HepG2 (cell line): ENCODE measurements at regions of chr12 and their contacts with region 1.

Region 1: GRCh38 chr12:52032804-52033502 is 18.3 kb upstream of the NR4A1 start:
- DNase-seq: peak; percentile 90
- ATAC-seq: peak; percentile 96
- H3K4me3 ChIP-seq: peak overlapping the region; percentile 31 to 51 (median 37); a peak in 5 of 6 replicates
- H3K27ac ChIP-seq: no peak overlapping the region
- H3K4me1 ChIP-seq: peaks cover 35% of the 10 kb centered on the region
- H3K27me3 ChIP-seq: peaks cover 3 to 40% of the 10 kb centered on the region in 2 experiments; a peak in 4 of 5 replicates
- CTCF ChIP-seq: 0 out of 2 replicates have a peak, but pooled peaks have one; percentile 4
- EP300 ChIP-seq: no peak
- POLR2A ChIP-seq: 0 out of 4 replicates have a peak, but pooled peaks of 1 of the 2 experiments have one; percentile 47
- RAD21 ChIP-seq: no peak

Region 2: GRCh38 chr12:52010152-52010622 is 22.8 kb before region 1 on chr12:
- CTCF ChIA-PET with region 1: no interaction called
- POLR2A ChIA-PET with region 1: interaction called, 11 read pairs
- in situ Hi-C with region 1: no loop called
- intact Hi-C with region 1: no loop called
- DNase-seq: peak; percentile 72
- ATAC-seq: peak; percentile 84
- H3K4me3 ChIP-seq: peak overlapping the region; percentile 19 to 64 (median 50); a peak in 5 of 6 replicates
- H3K27ac ChIP-seq: peak overlapping the region; percentile 62
- H3K4me1 ChIP-seq: peaks cover 49% of the 10 kb centered on the region
- H3K27me3 ChIP-seq: 0 out of 5 replicates have a peak, but pooled peaks cover 0 to 1% of the 10 kb centered on the region in 2 experiments
- CTCF ChIP-seq: peak; percentile 37
- EP300 ChIP-seq: no peak
- POLR2A ChIP-seq: peak in 1 of 2 experiments; percentile 47; a peak in 2 of 4 replicates
- RAD21 ChIP-seq: no peak

Region 3: GRCh38 chr12:52050761-52051541 is 18.0 kb after region 1 on chr12 and contains the start of gene NR4A1:
- CTCF ChIA-PET with region 1: no interaction called
- POLR2A ChIA-PET with region 1: interaction called, 34 read pairs
- in situ Hi-C with region 1: no loop called
- intact Hi-C with region 1: loop called (anchors 2 kb)
- DNase-seq: peak; percentile 85
- ATAC-seq: peak; percentile 83
- H3K4me3 ChIP-seq: peak within 1 kb of the TSS; percentile 82 to 98 (median 89)
- H3K27ac ChIP-seq: peak within 1 kb of the TSS; percentile 90
- H3K4me1 ChIP-seq: peaks cover 53% of the 10 kb centered on the region
- H3K27me3 ChIP-seq: no peaks in the 10 kb centered on the region
- CTCF ChIP-seq: peak; percentile 69
- EP300 ChIP-seq: no peak
- POLR2A ChIP-seq: peak; percentile 89 to 93
- RAD21 ChIP-seq: 0 out of 2 replicates have a peak, but pooled peaks have one; percentile 22
- total RNA-seq, gene NR4A1: 4.6 and 5.7 TPM in 2 replicates

Region 4: GRCh38 chr12:52069327-52070184 is 36.6 kb after region 1 on chr12 and contains the start of gene ATG101:
- CTCF ChIA-PET with region 1: interaction called, 5 read pairs
- POLR2A ChIA-PET with region 1: interaction called, 16 read pairs
- in situ Hi-C with region 1: no loop called
- intact Hi-C with region 1: no loop called
- DNase-seq: peak; percentile 90
- ATAC-seq: peak; percentile 97
- H3K4me3 ChIP-seq: peak within 1 kb of the TSS; percentile 87 to 98 (median 88)
- H3K27ac ChIP-seq: peak within 1 kb of the TSS; percentile 85
- H3K4me1 ChIP-seq: peaks cover 46% of the 10 kb centered on the region
- H3K27me3 ChIP-seq: no peaks in the 10 kb centered on the region; a peak in 1 of 5 replicates
- CTCF ChIP-seq: peak; percentile 93
- EP300 ChIP-seq: peak in 1 of 2 experiments; percentile 22; a peak in 1 of 4 replicates
- POLR2A ChIP-seq: peak; percentile 72 to 77
- RAD21 ChIP-seq: peak; percentile 54; the same call in 1 of the 2 replicates
- total RNA-seq, gene ATG101: 66.7 and 67.7 TPM in 2 replicates

Region 5: GRCh38 chr12:52082988-52083637 is 50.2 kb after region 1 on chr12:
- CTCF ChIA-PET with region 1: no interaction called
- POLR2A ChIA-PET with region 1: interaction called, 8 read pairs
- in situ Hi-C with region 1: loop called (anchors 5 kb)
- intact Hi-C with region 1: no loop called
- DNase-seq: peak; percentile 40
- ATAC-seq: peak; percentile 65
- H3K4me3 ChIP-seq: peak overlapping the region; percentile 3 to 71 (median 13); a peak in 2 of 6 replicates
- H3K27ac ChIP-seq: peak overlapping the region; percentile 46
- H3K4me1 ChIP-seq: peaks cover 49% of the 10 kb centered on the region
- H3K27me3 ChIP-seq: peaks cover 11 to 36% of the 10 kb centered on the region in 2 experiments
- CTCF ChIP-seq: peak; percentile 90
- EP300 ChIP-seq: no peak
- POLR2A ChIP-seq: no peak
- RAD21 ChIP-seq: peak; percentile 89

Region 6: GRCh38 chr12:52121824-52122539 is 89.0 kb after region 1 on chr12:
- CTCF ChIA-PET with region 1: interaction called, 41 read pairs
- POLR2A ChIA-PET with region 1: interaction called, 6 read pairs
- in situ Hi-C with region 1: loop called (anchors 5 kb)
- intact Hi-C with region 1: no loop called
- DNase-seq: no peak
- ATAC-seq: 0 out of 3 replicates have a peak, but pooled peaks have one; percentile 6
- H3K4me3 ChIP-seq: peak overlapping the region in 1 of 3 experiments; percentile 6; a peak in 1 of 6 replicates
- H3K27ac ChIP-seq: no peak overlapping the region
- H3K4me1 ChIP-seq: peaks cover 71% of the 10 kb centered on the region
- H3K27me3 ChIP-seq: peaks cover 4 to 26% of the 10 kb centered on the region in 2 experiments; a peak in 3 of 5 replicates
- CTCF ChIP-seq: peak; percentile 85
- EP300 ChIP-seq: no peak
- POLR2A ChIP-seq: no peak
- RAD21 ChIP-seq: peak; percentile 50

Region 7: GRCh38 chr12:52221912-52222457 is 189.0 kb after region 1 on chr12:
- CTCF ChIA-PET with region 1: no interaction called
- POLR2A ChIA-PET with region 1: no interaction called
- in situ Hi-C with region 1: no loop called
- intact Hi-C with region 1: no loop called
- DNase-seq: no peak
- ATAC-seq: peak; percentile 37; the same call in 1 of the 3 replicates
- H3K4me3 ChIP-seq: no peak overlapping the region
- H3K27ac ChIP-seq: no peak overlapping the region
- H3K4me1 ChIP-seq: peaks cover 5% of the 10 kb centered on the region; the same call in 1 of the 2 replicates
- H3K27me3 ChIP-seq: peaks cover 0 to 6% of the 10 kb centered on the region in 2 experiments; a peak in 2 of 5 replicates
- CTCF ChIP-seq: peak; percentile 55
- EP300 ChIP-seq: no peak
- POLR2A ChIP-seq: no peak
- RAD21 ChIP-seq: no peak